WTC11 (cell line): ENCODE measurements at regions of chr15 and their contacts with region 1.

Region 1: DNA sequence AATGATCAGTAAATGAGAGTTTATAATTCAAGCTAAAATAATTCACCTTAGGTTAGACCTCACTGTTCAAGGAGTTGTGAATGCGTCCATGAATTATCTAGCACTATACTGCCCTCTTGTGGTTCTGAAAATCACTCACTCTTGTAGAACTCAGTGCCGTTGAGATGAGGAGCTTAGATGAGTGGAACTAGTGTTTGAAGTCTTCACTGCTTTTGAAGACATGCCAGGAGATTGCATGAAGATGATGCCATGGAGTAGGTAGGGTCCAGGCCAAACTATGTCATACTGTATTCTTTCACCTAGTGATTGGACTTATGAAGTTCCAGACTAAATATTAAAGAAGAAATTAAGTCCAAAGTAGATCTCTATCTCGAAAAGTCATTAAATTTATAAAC is 28.8 kb downstream of the LYSMD4 start:
- DNase-seq: no peak
- ATAC-seq: peak; percentile 84
- H3K4me3 Mint-ChIP-seq: no peak overlapping the region
- H3K27ac Mint-ChIP-seq: 0 out of 2 replicates have a peak overlapping the region, but pooled peaks have one; percentile 0
- H3K4me1 Mint-ChIP-seq: peaks cover 22% of the 10 kb centered on the region
- H3K27me3 Mint-ChIP-seq: no peaks in the 10 kb centered on the region
- CTCF ChIP-seq: 0 out of 2 replicates have a peak, but pooled peaks have one; percentile 32

Region 2: GRCh38 chr15:99275525-99276128 is 428.8 kb before region 1 on chr15:
- CTCF ChIA-PET with region 1: interaction called, 66 read pairs
- POLR2A ChIA-PET with region 1: no interaction called
- DNase-seq: peak; percentile 22
- ATAC-seq: 0 out of 2 replicates have a peak, but pooled peaks have one; percentile 16
- H3K4me3 Mint-ChIP-seq: no peak overlapping the region
- H3K27ac Mint-ChIP-seq: no peak overlapping the region
- H3K4me1 Mint-ChIP-seq: peaks cover 8% of the 10 kb centered on the region
- H3K27me3 Mint-ChIP-seq: no peaks in the 10 kb centered on the region
- CTCF ChIP-seq: no peak

Region 3: DNA sequence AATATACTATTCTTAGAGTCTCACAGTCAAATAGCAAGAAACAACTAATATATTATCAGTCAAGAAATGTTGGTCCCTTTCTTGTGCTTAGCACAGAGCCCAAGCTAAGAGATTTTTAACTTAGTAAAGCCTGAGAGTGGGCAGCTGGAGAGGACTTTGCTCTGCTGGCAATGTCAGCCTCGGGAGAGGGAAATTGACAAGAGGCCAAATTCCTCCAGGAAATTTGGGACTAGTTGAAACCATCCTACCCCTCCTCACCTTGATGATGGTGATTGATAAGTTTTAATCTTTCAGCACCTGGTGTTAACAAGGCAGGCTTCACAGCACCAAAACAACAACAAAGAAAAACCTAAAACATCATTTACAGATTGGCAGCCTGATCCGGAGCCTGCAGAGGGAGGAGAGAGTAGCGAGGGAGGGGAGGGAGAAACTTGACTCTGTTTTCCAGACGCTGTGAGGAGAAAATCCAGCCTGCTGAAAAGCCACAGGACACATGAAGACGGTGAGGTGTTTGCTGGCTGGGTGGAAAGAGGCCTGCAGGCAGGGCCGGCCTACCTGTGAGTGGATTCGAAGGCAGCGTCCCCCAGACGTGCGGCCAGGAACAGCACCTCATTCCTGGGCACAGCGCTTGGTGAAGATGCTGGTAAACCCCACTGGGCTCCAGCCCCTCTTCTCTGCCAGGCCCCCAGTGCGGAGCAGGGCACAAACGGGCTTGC is 302.3 kb before region 1 on chr15:
- CTCF ChIA-PET with region 1: interaction called, 13 read pairs
- POLR2A ChIA-PET with region 1: no interaction called
- DNase-seq: no peak
- ATAC-seq: peak; percentile 63
- H3K4me3 Mint-ChIP-seq: no peak overlapping the region
- H3K27ac Mint-ChIP-seq: peak overlapping the region; percentile 2; the same call in 1 of the 2 replicates
- H3K4me1 Mint-ChIP-seq: peaks cover 8% of the 10 kb centered on the region
- H3K27me3 Mint-ChIP-seq: no peaks in the 10 kb centered on the region
- CTCF ChIP-seq: no peak

Region 4: GRCh38 chr15:99421172-99421656 is 283.2 kb before region 1 on chr15:
- CTCF ChIA-PET with region 1: interaction called, 12 read pairs
- POLR2A ChIA-PET with region 1: no interaction called
- DNase-seq: peak; percentile 45
- ATAC-seq: peak; percentile 51
- H3K4me3 Mint-ChIP-seq: no peak overlapping the region
- H3K27ac Mint-ChIP-seq: no peak overlapping the region
- H3K4me1 Mint-ChIP-seq: peaks cover 11% of the 10 kb centered on the region; the same call in 1 of the 2 replicates
- H3K27me3 Mint-ChIP-seq: peaks cover 2% of the 10 kb centered on the region; the same call in 1 of the 2 replicates
- CTCF ChIP-seq: no peak

Region 5: GRCh38 chr15:99565299-99566156 is 138.9 kb before region 1 on chr15 and contains the start of gene MEF2A:
- CTCF ChIA-PET with region 1: interaction called, 24 read pairs
- POLR2A ChIA-PET with region 1: interaction called, 7 read pairs
- DNase-seq: peak; percentile 94
- ATAC-seq: peak; percentile 70
- H3K4me3 Mint-ChIP-seq: peak within 1 kb of the TSS; percentile 99
- H3K27ac Mint-ChIP-seq: peak within 1 kb of the TSS; percentile 97
- H3K4me1 Mint-ChIP-seq: peaks cover 60% of the 10 kb centered on the region
- H3K27me3 Mint-ChIP-seq: no peaks in the 10 kb centered on the region
- CTCF ChIP-seq: no peak
- total RNA-seq, gene MEF2A: 22.2 to 30.7 TPM (median 25.5 TPM) in 3 replicates

Region 6: DNA sequence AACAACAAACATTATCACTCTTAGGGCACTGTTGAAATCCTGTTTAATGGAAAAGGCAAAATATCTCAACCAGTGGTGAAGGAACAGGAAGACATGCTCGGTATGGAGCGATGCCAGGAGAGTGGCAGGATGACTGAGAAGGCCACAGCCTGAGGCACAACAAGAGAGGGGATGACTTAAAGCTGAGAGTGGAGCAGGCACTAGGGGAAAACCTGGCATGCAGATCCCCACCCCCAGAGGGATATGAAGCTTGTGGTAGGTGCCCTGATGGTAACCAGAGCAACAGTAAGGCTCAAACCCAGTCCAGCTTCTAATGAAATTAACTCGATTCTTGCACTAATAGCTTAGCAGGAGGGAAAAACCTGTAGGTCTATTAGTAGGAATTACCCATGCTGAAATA is 11.6 kb before region 1 on chr15:
- CTCF ChIA-PET with region 1: interaction called, 13 read pairs
- POLR2A ChIA-PET with region 1: no interaction called
- DNase-seq: no peak
- ATAC-seq: no peak
- H3K4me3 Mint-ChIP-seq: no peak overlapping the region
- H3K27ac Mint-ChIP-seq: 0 out of 2 replicates have a peak overlapping the region, but pooled peaks have one; percentile 46
- H3K4me1 Mint-ChIP-seq: no peaks in the 10 kb centered on the region
- H3K27me3 Mint-ChIP-seq: no peaks in the 10 kb centered on the region
- CTCF ChIP-seq: no peak

Region 7: DNA sequence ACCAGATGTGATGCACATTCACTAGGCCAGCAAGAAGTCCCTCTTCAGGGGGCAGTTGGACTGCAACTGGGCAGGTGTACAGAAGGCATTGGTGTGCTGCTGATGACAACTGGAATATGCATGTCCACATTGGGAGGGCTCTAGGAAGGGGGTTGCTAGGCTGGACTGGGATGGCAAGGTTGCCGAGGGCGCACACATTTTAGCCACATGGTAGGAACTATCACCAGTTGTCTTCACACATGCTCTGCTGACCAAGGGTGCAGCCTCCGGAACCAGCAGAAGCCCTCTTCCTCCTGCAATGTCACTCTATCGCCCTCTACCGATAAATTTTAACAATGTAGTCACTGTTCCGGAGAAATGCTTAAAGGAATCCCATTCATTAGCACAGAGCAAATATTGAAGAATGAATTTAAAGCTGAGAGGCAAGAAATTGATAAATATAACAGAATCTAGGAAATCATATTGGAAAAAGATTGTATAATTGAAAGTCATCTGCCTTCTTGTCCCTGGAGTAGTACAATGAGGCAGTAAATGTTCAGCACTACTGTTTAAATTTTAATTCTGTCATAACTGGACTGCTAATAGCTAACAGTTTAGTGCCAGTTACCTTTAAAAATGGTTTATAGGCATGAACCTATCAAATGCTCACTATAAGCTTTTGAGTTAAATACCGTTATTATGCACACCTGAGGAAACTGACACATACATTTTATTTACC is 51.4 kb after region 1 on chr15:
- CTCF ChIA-PET with region 1: interaction called, 13 read pairs
- POLR2A ChIA-PET with region 1: no interaction called
- DNase-seq: peak; percentile 28
- ATAC-seq: peak; percentile 92
- H3K4me3 Mint-ChIP-seq: no peak overlapping the region
- H3K27ac Mint-ChIP-seq: no peak overlapping the region
- H3K4me1 Mint-ChIP-seq: peaks cover under 1% of the 10 kb centered on the region
- H3K27me3 Mint-ChIP-seq: peaks cover 22% of the 10 kb centered on the region
- CTCF ChIP-seq: peak; percentile 32